GM18951 (cell line): ENCODE measurements at regions of chr9 and their contacts with region 1.

Region 1: DNA sequence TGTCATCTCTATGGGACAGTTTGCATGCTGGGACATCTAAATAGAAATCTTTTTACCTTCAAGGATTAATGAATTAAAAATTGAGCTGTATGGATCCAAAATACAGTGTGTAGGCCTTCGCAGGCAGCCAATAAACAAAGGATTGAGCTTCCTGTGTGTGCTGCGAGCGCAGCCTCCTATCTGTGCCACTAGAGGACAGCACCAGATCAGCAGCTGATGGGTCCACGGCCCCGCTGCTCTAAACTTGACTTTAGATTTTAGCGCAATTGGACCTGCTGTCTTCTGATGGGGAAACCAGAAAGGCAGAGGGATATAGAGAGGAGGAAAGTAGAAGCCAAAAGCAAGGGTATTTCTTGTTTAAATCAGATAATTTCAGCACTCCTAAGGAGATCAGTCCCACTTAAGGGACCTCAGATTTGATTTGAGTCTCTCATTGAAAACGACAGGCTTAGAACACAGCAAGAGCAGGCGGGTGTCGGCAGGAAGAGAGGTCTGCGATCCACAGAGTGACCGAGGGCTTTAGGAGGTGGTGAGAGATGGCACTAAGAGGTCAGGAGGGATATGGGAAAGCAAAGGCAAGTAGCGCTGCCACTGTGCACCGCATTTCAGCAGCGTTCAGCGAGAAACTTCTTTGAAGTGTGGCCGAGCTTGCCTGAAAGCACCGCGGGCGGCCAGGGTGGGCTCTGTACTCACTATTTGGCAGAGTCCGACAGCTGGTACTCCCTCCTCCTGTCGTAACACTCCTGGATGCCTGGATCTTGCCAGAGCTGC is 214.3 kb downstream of the GNA14 start:
- POLR2A ChIP-seq: no peak

Region 2: GRCh38 chr9:77575785-77576184 is 141.9 kb after region 1 on chr9:
- in situ Hi-C with region 1: no loop called
- POLR2A ChIP-seq: no peak

Region 3: GRCh38 chr9:77697238-77697984 is 263.6 kb after region 1 on chr9:
- in situ Hi-C with region 1: no loop called
- POLR2A ChIP-seq: no peak

Region 4: DNA sequence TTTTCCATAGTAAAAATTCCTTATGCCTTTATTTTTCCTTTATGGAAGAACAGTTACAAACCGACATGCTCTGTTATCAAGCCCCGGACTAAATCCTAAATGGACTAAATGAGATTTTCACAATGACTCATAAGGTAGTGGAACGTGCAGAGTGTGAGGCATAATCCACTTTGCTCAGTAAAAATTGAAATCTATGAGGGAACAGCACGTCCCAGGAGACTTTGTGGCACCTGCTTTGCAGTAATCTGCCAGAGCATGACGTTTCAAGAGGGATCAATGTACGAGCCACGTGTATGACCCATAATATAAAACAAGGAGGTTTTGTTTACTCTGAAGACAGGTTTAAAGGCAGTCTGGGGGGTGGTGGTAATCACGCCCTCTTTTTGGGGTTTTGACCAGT is 298.1 kb after region 1 on chr9:
- in situ Hi-C with region 1: loop called (anchors 25 kb)
- POLR2A ChIP-seq: no peak